Colonic mucosa (tissue), 4 donors: ENCODE measurements at regions of chr6 and their contacts with region 1.

Region 1: DNA sequence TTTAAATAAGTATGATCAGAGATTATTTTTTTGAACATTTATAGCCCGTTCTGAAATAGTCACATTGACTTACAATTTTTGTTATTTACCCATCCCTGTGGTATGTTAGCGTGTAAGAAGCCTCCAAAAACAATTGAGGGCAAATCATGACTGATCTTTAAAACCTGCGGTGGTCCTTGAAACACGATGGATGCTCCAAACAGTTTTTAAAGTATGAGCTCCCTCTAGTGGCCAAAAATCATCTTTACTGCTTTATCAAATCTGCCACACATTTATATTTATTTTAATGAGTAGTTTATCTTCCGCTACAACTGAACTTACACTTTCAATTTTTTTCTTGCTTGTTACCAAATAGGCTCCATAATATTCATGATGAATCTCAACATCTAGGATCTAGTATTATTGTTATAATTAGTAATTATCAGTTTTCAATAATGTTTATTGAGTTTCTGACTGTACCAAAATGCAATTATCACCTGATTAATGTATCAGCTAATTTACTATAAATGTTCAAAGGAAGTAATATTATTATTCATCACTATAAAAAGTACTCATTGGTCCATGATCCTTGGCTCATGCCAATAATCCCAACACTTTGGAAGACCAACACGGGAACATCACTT is 52.2 kb downstream of the MARCKS start:
- DNase-seq: no peak
- H3K4me3 ChIP-seq: no peak overlapping the region
- H3K27ac ChIP-seq: no peak overlapping the region
- H3K4me1 ChIP-seq: no peaks in the 10 kb centered on the region
- H3K27me3 ChIP-seq: no peaks in the 10 kb centered on the region
- CTCF ChIP-seq: peak; percentile 64

Region 2: GRCh38 chr6:112780498-112781096 is 1128.7 kb before region 1 on chr6:
- intact Hi-C with region 1: loop called (anchors 5 kb)
- DNase-seq: peak; percentile 77
- H3K4me3 ChIP-seq: no peak overlapping the region
- H3K27ac ChIP-seq: no peak overlapping the region
- H3K4me1 ChIP-seq: no peaks in the 10 kb centered on the region
- H3K27me3 ChIP-seq: no peaks in the 10 kb centered on the region
- CTCF ChIP-seq: peak; percentile 75

Region 3: GRCh38 chr6:113433335-113433991 is 475.9 kb before region 1 on chr6:
- intact Hi-C with region 1: no loop called
- DNase-seq: peak; percentile 59
- H3K4me3 ChIP-seq: no peak overlapping the region
- H3K27ac ChIP-seq: no peak overlapping the region
- H3K4me1 ChIP-seq: no peaks in the 10 kb centered on the region
- H3K27me3 ChIP-seq: no peaks in the 10 kb centered on the region
- CTCF ChIP-seq: no peak

Region 4: GRCh38 chr6:114055349-114055748 is 146.0 kb after region 1 on chr6:
- intact Hi-C with region 1: no loop called
- DNase-seq: no peak
- H3K4me3 ChIP-seq: no peak overlapping the region
- H3K27ac ChIP-seq: no peak overlapping the region
- H3K4me1 ChIP-seq: no peaks in the 10 kb centered on the region
- H3K27me3 ChIP-seq: no peaks in the 10 kb centered on the region
- CTCF ChIP-seq: no peak

Region 5: DNA sequence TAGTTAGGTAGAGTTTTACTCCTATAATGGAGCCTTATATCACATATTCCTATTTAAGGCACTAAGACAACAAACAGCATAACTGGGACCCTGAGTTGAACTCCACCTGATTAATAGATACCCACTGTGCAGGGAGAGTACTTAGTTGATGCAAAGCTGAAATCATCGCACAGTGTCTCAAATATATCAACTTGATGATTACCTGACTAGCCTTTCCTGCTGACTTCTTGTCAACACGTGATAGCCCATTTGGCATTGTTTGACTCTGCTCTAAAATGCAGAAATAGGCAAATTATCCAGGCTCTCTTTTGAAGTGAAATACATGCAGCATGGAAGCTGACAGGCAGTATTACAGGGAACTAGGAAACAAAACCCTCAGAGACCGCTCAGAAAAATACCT is 216.2 kb after region 1 on chr6:
- intact Hi-C with region 1: no loop called
- DNase-seq: no peak
- H3K4me3 ChIP-seq: no peak overlapping the region
- H3K27ac ChIP-seq: no peak overlapping the region
- H3K4me1 ChIP-seq: no peaks in the 10 kb centered on the region
- H3K27me3 ChIP-seq: no peaks in the 10 kb centered on the region
- CTCF ChIP-seq: no peak